ENCODE measurements at regions of chr3 and their contacts with region 1.

Region 1: DNA sequence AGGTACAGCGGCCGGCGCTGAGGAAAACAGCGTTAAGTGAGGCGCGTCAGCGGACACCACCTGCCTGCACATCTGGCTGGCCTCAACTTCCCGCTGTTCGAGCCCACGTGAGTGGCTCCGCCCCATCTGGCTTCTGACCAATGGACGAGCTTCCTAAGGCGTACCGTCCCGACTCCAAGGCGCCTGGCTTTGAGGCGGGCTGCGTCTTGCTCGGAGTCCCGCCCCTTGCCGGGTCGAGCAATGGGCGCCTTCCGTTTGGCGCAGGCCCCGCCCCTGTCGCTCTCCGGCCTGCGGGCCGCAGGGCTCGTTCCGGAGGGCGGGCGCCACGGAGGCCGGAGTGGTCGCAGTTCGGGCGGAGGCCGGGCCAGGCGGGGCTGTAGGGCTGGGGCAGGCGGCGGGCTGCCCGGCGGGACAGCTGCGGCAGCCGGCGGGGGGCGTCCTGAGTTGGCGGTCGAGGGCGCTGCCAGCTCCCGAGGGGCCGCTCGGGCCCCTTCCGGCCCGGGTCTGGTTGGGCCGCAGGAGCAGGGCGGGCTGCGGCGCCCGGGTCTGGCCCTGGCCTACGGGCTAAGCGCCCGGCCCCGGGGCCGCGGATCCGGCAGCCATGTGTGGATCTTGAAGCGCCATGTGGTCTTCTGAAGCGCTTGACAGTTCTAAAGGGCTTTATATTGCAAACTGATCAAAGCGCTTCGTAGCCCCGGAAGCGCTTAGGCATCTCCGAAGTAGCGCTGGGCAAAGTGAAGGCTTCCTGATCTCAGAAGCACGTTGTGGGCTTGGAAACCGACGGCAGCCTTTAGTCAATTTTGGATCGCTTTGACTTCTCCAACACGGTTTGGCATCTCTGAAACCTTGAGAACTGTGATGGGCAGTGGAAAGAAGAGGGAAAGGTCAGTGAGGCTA is at the start of gene TATDN2:
- DNase-seq: peak; percentile 75 to 98 (median 91)
- ATAC-seq: peak; percentile 92
- H3K4me3 ChIP-seq: peak within 1 kb of the TSS; percentile 86 to 92
- H3K4me3 Mint-ChIP-seq: peak within 1 kb of the TSS; percentile 97
- H3K27ac ChIP-seq: peak within 1 kb of the TSS; percentile 64 to 76
- H3K27ac Mint-ChIP-seq: peak within 1 kb of the TSS; percentile 93
- H3K4me1 ChIP-seq: peaks cover 32% of the 10 kb centered on the region
- H3K4me1 Mint-ChIP-seq: peaks cover 52% of the 10 kb centered on the region
- H3K27me3 ChIP-seq: no peaks in the 10 kb centered on the region
- H3K27me3 Mint-ChIP-seq: no peaks in the 10 kb centered on the region
- CTCF ChIP-seq: no peak
- total RNA-seq, gene TATDN2: 40.2 to 40.3 TPM

Region 2: DNA sequence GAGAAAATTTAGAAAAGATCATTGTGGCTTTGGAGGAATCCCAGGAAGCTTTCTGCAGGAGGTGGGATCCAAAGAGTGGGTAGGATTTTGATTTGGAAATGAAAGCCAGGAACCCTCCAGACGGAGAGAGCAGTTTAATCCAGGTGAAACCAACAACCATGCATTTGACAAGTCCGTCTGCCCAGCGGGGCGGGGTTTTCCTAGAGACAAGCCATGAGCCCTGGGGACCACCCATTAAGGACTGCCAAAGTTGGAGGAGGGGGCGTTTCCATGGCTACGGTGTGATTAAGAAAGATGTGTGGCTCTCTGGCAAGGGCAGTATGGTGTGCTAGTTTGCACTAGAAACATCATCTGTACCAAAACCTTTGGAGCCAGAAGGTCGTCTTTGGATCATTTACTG is 1052.4 kb before region 1 on chr3:
- CTCF ChIA-PET with region 1: no interaction called
- POLR2A ChIA-PET with region 1: no interaction called
- intact Hi-C with region 1: no loop called
- DNase-seq: no peak
- ATAC-seq: no peak
- H3K4me3 ChIP-seq: no peak overlapping the region
- H3K4me3 Mint-ChIP-seq: no peak overlapping the region
- H3K27ac ChIP-seq: no peak overlapping the region
- H3K27ac Mint-ChIP-seq: no peak overlapping the region
- H3K4me1 ChIP-seq: no peaks in the 10 kb centered on the region
- H3K4me1 Mint-ChIP-seq: no peaks in the 10 kb centered on the region
- H3K27me3 ChIP-seq: no peaks in the 10 kb centered on the region
- H3K27me3 Mint-ChIP-seq: peaks cover 2% of the 10 kb centered on the region
- CTCF ChIP-seq: no peak

Region 3: GRCh38 chr3:9396700-9397521 is 851.5 kb before region 1 on chr3:
- CTCF ChIA-PET with region 1: no interaction called
- POLR2A ChIA-PET with region 1: interaction called, 6 read pairs
- intact Hi-C with region 1: loop called in 1 of 2 experiments (anchors 10 kb)
- DNase-seq: peak; percentile 98 to 100 (median 99)
- ATAC-seq: peak; percentile 67
- H3K4me3 ChIP-seq: peak overlapping the region; percentile 68 to 73
- H3K4me3 Mint-ChIP-seq: peak overlapping the region; percentile 94
- H3K27ac ChIP-seq: peak overlapping the region; percentile 90 to 97
- H3K27ac Mint-ChIP-seq: peak overlapping the region; percentile 97
- H3K4me1 ChIP-seq: peaks cover 69% of the 10 kb centered on the region
- H3K4me1 Mint-ChIP-seq: peaks cover 72% of the 10 kb centered on the region
- H3K27me3 ChIP-seq: no peaks in the 10 kb centered on the region
- H3K27me3 Mint-ChIP-seq: no peaks in the 10 kb centered on the region
- CTCF ChIP-seq: no peak

Region 4: GRCh38 chr3:9721015-9721699 is 527.3 kb before region 1 on chr3:
- CTCF ChIA-PET with region 1: no interaction called
- POLR2A ChIA-PET with region 1: no interaction called
- intact Hi-C with region 1: no loop called
- DNase-seq: no peak
- ATAC-seq: no peak
- H3K4me3 ChIP-seq: no peak overlapping the region
- H3K4me3 Mint-ChIP-seq: no peak overlapping the region
- H3K27ac ChIP-seq: no peak overlapping the region
- H3K27ac Mint-ChIP-seq: no peak overlapping the region
- H3K4me1 ChIP-seq: peaks cover 7% of the 10 kb centered on the region
- H3K4me1 Mint-ChIP-seq: peaks cover 11% of the 10 kb centered on the region
- H3K27me3 ChIP-seq: no peaks in the 10 kb centered on the region
- H3K27me3 Mint-ChIP-seq: no peaks in the 10 kb centered on the region
- CTCF ChIP-seq: no peak

Region 5: DNA sequence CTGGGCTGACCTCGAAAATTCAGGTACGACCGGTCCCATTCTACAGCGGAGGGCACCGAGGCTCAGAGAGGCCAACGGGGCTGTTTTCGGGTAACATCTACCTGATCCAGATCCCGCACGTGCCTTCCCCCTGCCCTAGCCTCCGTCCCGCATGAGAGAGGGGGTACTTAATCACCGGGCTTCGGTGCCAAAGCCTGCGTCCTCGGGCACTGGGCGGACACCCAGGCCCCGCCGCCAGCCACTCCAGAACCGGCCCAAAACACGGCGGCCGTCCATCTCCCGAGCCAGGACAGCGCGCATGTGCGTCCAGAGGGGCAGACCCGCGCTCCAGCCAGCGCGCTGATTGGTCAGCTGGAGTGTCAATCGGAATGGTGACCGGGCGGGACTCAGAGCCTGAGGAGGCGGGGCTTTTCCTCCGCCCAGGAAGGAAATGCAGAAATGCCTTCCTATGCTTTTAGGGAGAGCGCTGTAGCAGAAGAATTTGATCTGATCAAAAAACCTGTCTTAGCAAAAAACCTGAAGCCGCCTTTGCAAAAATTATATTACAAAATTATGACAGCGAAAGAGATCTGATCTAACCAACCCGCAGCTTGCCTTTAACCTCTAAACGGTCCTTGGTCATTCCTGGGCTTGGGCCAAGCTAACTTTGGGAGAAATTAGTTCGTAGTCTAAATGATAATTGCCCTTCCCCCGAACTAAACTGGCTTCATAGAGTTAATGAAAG is 404.6 kb before region 1 on chr3 and contains the start of gene RPUSD3:
- CTCF ChIA-PET with region 1: no interaction called
- POLR2A ChIA-PET with region 1: no interaction called
- intact Hi-C with region 1: loop called in 1 of 2 experiments (anchors 10 kb)
- DNase-seq: peak; percentile 93 to 99 (median 96)
- ATAC-seq: peak; percentile 98
- H3K4me3 ChIP-seq: peak within 1 kb of the TSS; percentile 96 to 99
- H3K4me3 Mint-ChIP-seq: peak within 1 kb of the TSS; percentile 97
- H3K27ac ChIP-seq: peak within 1 kb of the TSS; percentile 64 to 82
- H3K27ac Mint-ChIP-seq: peak within 1 kb of the TSS; percentile 90
- H3K4me1 ChIP-seq: peaks cover 6% of the 10 kb centered on the region
- H3K4me1 Mint-ChIP-seq: peaks cover 26% of the 10 kb centered on the region
- H3K27me3 ChIP-seq: no peaks in the 10 kb centered on the region
- H3K27me3 Mint-ChIP-seq: no peaks in the 10 kb centered on the region
- CTCF ChIP-seq: no peak
- total RNA-seq, gene RPUSD3: 5.3 to 6.4 TPM

Region 6: DNA sequence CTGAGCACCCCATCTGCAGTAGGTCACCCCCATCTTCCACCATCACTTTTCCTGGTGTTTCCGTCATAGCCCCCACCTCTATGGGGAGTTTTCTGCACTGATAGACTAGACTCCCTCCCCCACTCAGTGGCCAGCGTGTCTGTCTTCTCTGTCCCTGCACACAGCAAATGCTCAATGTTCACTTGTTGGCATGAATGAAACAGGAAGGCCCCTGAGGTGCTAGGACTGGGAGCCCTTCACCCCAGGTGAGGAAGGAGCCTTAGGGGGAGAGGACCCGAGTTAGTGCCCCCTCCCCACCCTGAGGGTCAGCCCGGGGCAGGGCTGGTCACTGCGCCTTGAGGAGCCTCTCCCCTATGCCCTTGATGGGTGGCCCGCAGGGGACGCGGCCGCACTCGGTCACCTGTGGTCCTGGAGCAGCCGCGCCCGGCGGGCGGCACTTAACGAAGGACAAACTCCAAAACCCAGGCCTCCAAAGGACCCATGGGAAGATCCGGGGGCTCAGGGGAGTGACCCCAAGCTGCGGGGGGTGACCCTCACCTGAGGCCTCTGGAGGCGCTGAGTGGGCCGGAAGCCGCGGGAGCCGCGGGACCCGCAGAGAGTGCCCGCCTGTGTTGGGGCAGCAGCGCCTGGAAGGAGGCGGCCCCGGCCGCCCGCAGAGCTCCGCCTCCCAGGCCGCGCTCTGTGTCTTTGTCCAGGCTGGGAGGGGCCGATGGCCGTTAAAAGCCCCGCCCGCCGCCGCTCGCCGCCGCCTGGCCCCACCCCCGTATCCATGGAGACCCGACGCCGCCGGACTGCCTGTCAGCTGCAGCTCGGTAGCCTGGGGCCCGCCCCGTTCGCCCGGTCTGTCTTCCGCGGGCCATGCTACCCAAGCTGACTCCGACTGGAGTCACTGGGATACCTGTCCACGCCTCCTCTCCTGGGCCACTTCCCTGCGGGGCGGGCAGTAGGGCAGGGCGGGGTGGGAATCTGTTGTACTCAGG is 237.7 kb before region 1 on chr3:
- CTCF ChIA-PET with region 1: no interaction called
- POLR2A ChIA-PET with region 1: no interaction called
- intact Hi-C with region 1: loop called in 1 of 2 experiments (anchors 1 kb)
- DNase-seq: peak; percentile 46 to 88 (median 75)
- ATAC-seq: peak; percentile 54
- H3K4me3 ChIP-seq: peak overlapping the region; percentile 50 to 55
- H3K4me3 Mint-ChIP-seq: peak overlapping the region; percentile 68
- H3K27ac ChIP-seq: no peak overlapping the region
- H3K27ac Mint-ChIP-seq: no peak overlapping the region
- H3K4me1 ChIP-seq: peaks cover 17% of the 10 kb centered on the region
- H3K4me1 Mint-ChIP-seq: peaks cover 18% of the 10 kb centered on the region
- H3K27me3 ChIP-seq: no peaks in the 10 kb centered on the region
- H3K27me3 Mint-ChIP-seq: peaks cover 7% of the 10 kb centered on the region
- CTCF ChIP-seq: no peak

Region 7: DNA sequence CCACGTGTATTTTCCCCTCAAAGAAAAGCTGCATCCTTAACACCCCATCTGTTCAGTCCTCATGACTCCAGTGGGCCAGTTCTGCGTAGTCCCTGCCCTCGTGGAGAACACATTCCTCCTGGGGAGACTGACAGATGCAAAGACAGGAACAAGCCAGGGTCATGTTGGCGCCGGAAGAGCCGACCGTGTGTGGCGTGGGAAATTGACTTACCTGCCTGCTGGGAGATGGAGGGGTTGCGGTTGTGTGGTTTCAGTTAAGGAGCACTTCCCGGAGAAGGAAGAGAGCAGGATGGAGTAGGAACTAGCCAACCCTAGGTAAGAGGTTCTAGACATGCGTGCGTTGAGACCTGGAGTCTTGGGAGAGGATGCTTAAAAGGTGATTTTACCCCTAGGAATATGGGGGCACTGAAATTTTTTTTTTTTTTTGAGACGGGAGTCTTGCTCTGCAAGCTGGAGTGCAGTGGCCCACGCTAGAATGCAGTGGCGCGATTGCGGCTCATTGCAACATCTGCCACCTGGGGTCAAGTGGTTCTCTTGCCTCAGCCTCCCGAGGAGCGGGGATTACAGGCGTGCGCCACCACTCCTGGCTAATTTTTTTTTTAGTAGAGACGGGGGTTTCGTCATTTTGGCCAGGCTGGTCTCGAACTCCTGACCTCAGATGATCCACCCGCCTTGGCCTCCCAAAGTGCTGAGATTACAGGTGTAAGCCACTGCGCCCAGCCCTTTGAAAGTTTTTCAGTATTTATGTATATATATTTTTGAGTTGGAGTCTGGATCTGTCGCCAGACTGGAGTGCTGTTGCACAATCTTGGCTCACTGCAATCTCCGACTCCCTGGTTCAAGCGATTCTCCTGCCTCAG is 105.5 kb before region 1 on chr3:
- CTCF ChIA-PET with region 1: interaction called, 3 read pairs
- POLR2A ChIA-PET with region 1: interaction called, 10 read pairs
- intact Hi-C with region 1: loop called in 1 of 2 experiments (anchors 2 kb)
- DNase-seq: peak in 3 of 9 experiments; percentile 22 to 51 (median 33)
- ATAC-seq: no peak
- H3K4me3 ChIP-seq: peak overlapping the region; percentile 73 to 74
- H3K4me3 Mint-ChIP-seq: peak overlapping the region; percentile 93
- H3K27ac ChIP-seq: peak overlapping the region in 1 of 2 experiments; percentile 54
- H3K27ac Mint-ChIP-seq: peak overlapping the region; percentile 98
- H3K4me1 ChIP-seq: peaks cover 32% of the 10 kb centered on the region
- H3K4me1 Mint-ChIP-seq: peaks cover 32% of the 10 kb centered on the region
- H3K27me3 ChIP-seq: no peaks in the 10 kb centered on the region
- H3K27me3 Mint-ChIP-seq: no peaks in the 10 kb centered on the region
- CTCF ChIP-seq: no peak

Region 8: DNA sequence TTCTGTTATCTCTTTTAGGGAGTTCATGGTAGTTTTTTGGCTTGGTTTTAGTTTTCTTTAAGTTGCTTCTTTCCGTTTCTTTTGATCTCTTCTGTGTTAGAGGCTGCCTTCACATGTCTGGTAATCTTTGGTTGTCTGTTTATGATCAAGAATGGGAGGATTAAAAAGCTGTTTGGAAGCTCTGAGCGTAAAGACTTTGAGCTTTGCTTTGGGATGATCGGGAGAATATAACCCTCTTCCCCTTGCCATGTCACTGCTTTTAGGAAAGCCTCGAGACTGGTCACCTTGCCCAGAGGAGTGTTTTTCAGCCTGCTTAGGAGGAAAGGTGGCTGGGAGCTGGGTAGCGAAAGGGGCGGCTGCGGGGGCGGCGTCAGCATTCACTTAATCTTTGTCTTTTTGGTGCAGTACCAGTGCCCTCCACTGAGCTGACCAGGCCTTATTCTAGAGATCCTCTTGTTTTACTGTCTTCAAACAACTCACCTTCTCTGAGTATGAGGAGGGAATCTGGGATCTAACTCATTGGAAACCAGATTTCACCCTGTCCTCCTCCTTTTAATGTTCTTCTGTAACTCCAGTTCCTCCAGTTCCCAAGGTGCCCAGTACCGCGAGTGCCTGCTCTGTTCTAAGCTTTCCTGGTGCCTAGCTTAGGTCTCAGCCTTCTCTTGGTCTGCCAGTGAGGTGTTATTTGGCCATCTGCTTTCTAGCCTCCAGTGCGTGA is 15.4 kb after region 1 on chr3:
- CTCF ChIA-PET with region 1: interaction called, 25 read pairs
- POLR2A ChIA-PET with region 1: interaction called, 29 read pairs
- intact Hi-C with region 1: loop called (anchors 1 kb)
- DNase-seq: peak; percentile 36 to 80 (median 72)
- ATAC-seq: peak; percentile 98
- H3K4me3 ChIP-seq: peak overlapping the region; percentile 19 to 38
- H3K4me3 Mint-ChIP-seq: peak overlapping the region; percentile 68
- H3K27ac ChIP-seq: peak overlapping the region; percentile 20 to 73
- H3K27ac Mint-ChIP-seq: peak overlapping the region; percentile 86
- H3K4me1 ChIP-seq: peaks cover 61% of the 10 kb centered on the region
- H3K4me1 Mint-ChIP-seq: peaks cover 78% of the 10 kb centered on the region
- H3K27me3 ChIP-seq: no peaks in the 10 kb centered on the region
- H3K27me3 Mint-ChIP-seq: no peaks in the 10 kb centered on the region
- CTCF ChIP-seq: peak; percentile 56

Region 9: GRCh38 chr3:11568503-11569155 is 1320.2 kb after region 1 on chr3:
- CTCF ChIA-PET with region 1: no interaction called
- POLR2A ChIA-PET with region 1: no interaction called
- intact Hi-C with region 1: no loop called
- DNase-seq: no peak
- ATAC-seq: no peak
- H3K4me3 ChIP-seq: no peak overlapping the region
- H3K4me3 Mint-ChIP-seq: no peak overlapping the region
- H3K27ac ChIP-seq: no peak overlapping the region
- H3K27ac Mint-ChIP-seq: peak overlapping the region; percentile 70
- H3K4me1 ChIP-seq: no peaks in the 10 kb centered on the region
- H3K4me1 Mint-ChIP-seq: peaks cover 5% of the 10 kb centered on the region
- H3K27me3 ChIP-seq: no peaks in the 10 kb centered on the region
- H3K27me3 Mint-ChIP-seq: no peaks in the 10 kb centered on the region
- CTCF ChIP-seq: no peak